ENCODE measurements at regions of chr2 and their contacts with region 1.

Region 1: DNA sequence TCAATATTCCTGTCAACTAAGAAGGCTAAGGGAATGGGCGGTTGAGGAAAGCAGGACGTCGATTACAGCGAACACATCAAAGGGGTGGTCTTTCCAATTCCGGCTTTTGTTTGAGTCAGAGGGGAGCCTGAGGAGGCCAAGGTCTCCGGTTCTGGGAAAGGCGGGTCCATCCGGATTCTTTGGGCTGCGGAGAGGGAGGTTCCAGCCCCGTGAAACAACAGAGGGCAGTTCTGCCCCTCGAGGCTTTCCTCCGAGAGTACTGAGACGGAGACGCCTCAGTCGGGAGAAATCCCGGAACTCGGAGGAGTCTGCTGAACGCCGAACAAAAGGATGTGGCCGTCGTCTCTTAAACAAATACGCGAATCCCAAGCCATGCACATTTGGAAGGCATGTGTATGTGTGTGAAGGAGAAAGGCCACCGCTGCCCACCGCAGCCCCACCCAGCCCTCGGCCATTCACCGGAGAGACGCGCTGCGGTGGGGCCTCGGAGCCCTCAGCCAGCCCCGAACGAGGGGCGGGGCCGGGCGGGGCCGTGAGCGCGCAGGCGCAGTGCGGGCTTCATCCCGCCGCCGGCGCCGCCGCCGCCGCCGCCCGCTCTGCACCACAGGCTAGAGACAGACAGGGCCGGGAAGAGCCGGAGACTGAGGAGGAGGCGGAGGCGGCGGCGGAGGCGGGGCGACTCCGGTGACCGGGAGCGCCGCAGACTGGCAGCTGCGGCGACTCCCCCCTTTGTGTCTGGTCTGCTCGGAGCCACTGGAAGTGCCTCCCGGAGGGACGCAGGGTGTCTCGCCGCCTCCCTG is at the start of gene BMPR2:
- DNase-seq: peak; percentile 63 to 90 (median 81)
- ATAC-seq: peak; percentile 77
- H3K4me3 ChIP-seq: peak within 1 kb of the TSS; percentile 61 to 100
- H3K4me3 Mint-ChIP-seq: peak within 1 kb of the TSS; percentile 99
- H3K27ac ChIP-seq: peak within 1 kb of the TSS; percentile 64 to 80
- H3K27ac Mint-ChIP-seq: peak within 1 kb of the TSS; percentile 93
- H3K4me1 ChIP-seq: peaks cover 23% of the 10 kb centered on the region
- H3K4me1 Mint-ChIP-seq: peaks cover 30% of the 10 kb centered on the region
- H3K27me3 ChIP-seq: no peaks in the 10 kb centered on the region
- H3K27me3 Mint-ChIP-seq: no peaks in the 10 kb centered on the region
- CTCF ChIP-seq: no peak
- total RNA-seq, gene BMPR2: 9.4 to 9.6 TPM

Region 2: DNA sequence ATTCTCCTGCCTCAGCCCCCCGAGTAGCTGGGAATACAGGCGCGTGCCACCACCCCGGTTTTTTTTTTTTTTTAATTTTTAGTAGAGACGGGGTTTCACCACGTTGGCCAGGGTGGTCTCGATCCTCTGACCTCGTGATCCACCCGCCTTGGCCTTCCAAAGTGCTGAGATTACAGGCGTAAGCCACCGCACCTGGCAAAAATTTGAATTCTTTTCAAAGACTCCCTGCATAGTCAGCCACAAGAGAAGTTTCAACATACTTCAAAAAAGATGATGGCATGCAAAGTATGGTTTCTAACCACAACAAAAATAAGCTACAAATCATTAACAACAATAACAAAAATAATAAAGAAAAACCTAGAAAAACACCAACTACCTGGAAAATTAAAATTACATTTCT is 1326.4 kb before region 1 on chr2:
- CTCF ChIA-PET with region 1: no interaction called
- POLR2A ChIA-PET with region 1: no interaction called
- intact Hi-C with region 1: loop called in 1 of 2 experiments (anchors 5 kb)
- DNase-seq: no peak
- ATAC-seq: no peak
- H3K4me3 ChIP-seq: no peak overlapping the region
- H3K4me3 Mint-ChIP-seq: no peak overlapping the region
- H3K27ac ChIP-seq: no peak overlapping the region
- H3K27ac Mint-ChIP-seq: no peak overlapping the region
- H3K4me1 ChIP-seq: no peaks in the 10 kb centered on the region
- H3K4me1 Mint-ChIP-seq: peaks cover 39% of the 10 kb centered on the region
- H3K27me3 ChIP-seq: no peaks in the 10 kb centered on the region
- H3K27me3 Mint-ChIP-seq: no peaks in the 10 kb centered on the region
- CTCF ChIP-seq: no peak

Region 3: GRCh38 chr2:201406077-201406662 is 969.6 kb before region 1 on chr2:
- CTCF ChIA-PET with region 1: no interaction called
- POLR2A ChIA-PET with region 1: no interaction called
- intact Hi-C with region 1: no loop called
- DNase-seq: no peak
- ATAC-seq: no peak
- H3K4me3 ChIP-seq: no peak overlapping the region
- H3K4me3 Mint-ChIP-seq: no peak overlapping the region
- H3K27ac ChIP-seq: no peak overlapping the region
- H3K27ac Mint-ChIP-seq: peak overlapping the region; percentile 55
- H3K4me1 ChIP-seq: peaks cover 14% of the 10 kb centered on the region
- H3K4me1 Mint-ChIP-seq: peaks cover 54% of the 10 kb centered on the region
- H3K27me3 ChIP-seq: no peaks in the 10 kb centered on the region
- H3K27me3 Mint-ChIP-seq: no peaks in the 10 kb centered on the region
- CTCF ChIP-seq: no peak

Region 4: GRCh38 chr2:202033321-202034248 is 342.2 kb before region 1 on chr2 and contains the start of gene FZD7:
- CTCF ChIA-PET with region 1: no interaction called
- POLR2A ChIA-PET with region 1: no interaction called
- intact Hi-C with region 1: loop called in 1 of 2 experiments (anchors 5 kb)
- DNase-seq: peak; percentile 66 to 91 (median 83)
- ATAC-seq: peak; percentile 78
- H3K4me3 ChIP-seq: peak within 1 kb of the TSS; percentile 77 to 84
- H3K4me3 Mint-ChIP-seq: peak within 1 kb of the TSS; percentile 88
- H3K27ac ChIP-seq: peak within 1 kb of the TSS in 1 of 2 experiments; percentile 14
- H3K27ac Mint-ChIP-seq: no peak within 1 kb of the TSS
- H3K4me1 ChIP-seq: peaks cover 25% of the 10 kb centered on the region
- H3K4me1 Mint-ChIP-seq: peaks cover 13% of the 10 kb centered on the region
- H3K27me3 ChIP-seq: peaks cover 26 to 29% of the 10 kb centered on the region in 2 experiments
- H3K27me3 Mint-ChIP-seq: peaks cover 12% of the 10 kb centered on the region
- CTCF ChIP-seq: no peak
- total RNA-seq, gene FZD7: 0.73 to 0.97 TPM

Region 5: GRCh38 chr2:202265467-202266277 is 110.1 kb before region 1 on chr2 and contains the start of gene NOP58:
- CTCF ChIA-PET with region 1: no interaction called
- POLR2A ChIA-PET with region 1: no interaction called
- intact Hi-C with region 1: loop called (anchors 2 kb)
- DNase-seq: peak; percentile 80 to 97 (median 87)
- ATAC-seq: peak; percentile 75
- H3K4me3 ChIP-seq: peak within 1 kb of the TSS; percentile 80 to 100
- H3K4me3 Mint-ChIP-seq: peak within 1 kb of the TSS; percentile 52
- H3K27ac ChIP-seq: peak within 1 kb of the TSS; percentile 97 to 98
- H3K27ac Mint-ChIP-seq: peak within 1 kb of the TSS; percentile 43
- H3K4me1 ChIP-seq: peaks cover 18% of the 10 kb centered on the region
- H3K4me1 Mint-ChIP-seq: peaks cover 21% of the 10 kb centered on the region
- H3K27me3 ChIP-seq: no peaks in the 10 kb centered on the region
- H3K27me3 Mint-ChIP-seq: no peaks in the 10 kb centered on the region
- CTCF ChIP-seq: no peak
- total RNA-seq, gene NOP58: 345 to 352 TPM

Region 6: GRCh38 chr2:202290970-202291369 is 84.8 kb before region 1 on chr2:
- CTCF ChIA-PET with region 1: no interaction called
- POLR2A ChIA-PET with region 1: no interaction called
- intact Hi-C with region 1: no loop called
- DNase-seq: no peak
- ATAC-seq: no peak
- H3K4me3 ChIP-seq: no peak overlapping the region
- H3K4me3 Mint-ChIP-seq: no peak overlapping the region
- H3K27ac ChIP-seq: no peak overlapping the region
- H3K27ac Mint-ChIP-seq: no peak overlapping the region
- H3K4me1 ChIP-seq: no peaks in the 10 kb centered on the region
- H3K4me1 Mint-ChIP-seq: no peaks in the 10 kb centered on the region
- H3K27me3 ChIP-seq: no peaks in the 10 kb centered on the region
- H3K27me3 Mint-ChIP-seq: no peaks in the 10 kb centered on the region
- CTCF ChIP-seq: no peak

Region 7: DNA sequence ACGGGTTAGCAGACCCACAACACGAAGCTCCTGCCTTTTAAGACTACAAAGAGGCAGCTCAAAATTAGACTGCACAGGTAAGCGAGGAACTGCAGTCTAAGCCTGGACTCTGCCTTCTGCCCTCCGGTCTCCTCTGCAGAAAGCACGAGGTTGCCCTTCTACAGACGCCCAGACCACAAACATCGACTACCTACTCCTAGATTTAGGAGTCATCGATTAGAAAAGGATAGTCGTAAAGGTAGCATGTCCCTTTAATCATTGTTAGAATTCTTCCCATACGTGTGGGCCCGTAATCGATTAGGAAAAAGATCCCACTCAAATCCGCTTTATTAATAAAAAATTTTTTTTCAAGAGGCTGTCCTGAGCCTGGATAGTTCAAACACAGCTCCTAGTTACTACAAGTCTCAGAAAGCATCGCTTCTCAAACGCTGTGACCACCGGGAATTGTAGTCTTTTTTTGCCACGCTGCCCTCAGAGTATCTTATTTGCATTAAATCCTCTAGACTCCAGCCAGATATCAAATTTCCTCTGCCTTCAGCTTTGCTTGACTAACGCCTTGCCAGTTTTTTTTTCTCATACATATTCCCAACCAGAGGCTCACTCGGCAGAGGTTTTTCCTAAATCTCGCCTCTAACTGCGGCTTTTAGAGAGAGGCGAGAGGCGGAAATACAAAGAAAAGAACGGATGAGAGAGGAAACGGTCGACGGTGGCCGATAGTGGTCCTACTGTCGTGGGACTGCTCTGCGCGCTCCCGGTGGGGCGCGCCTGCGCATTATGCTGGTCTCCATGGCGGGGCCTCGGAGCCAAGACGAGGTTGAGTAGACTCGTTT is 535.9 kb after region 1 on chr2 and contains the starts of genes CARF and WDR12:
- CTCF ChIA-PET with region 1: no interaction called
- POLR2A ChIA-PET with region 1: no interaction called
- intact Hi-C with region 1: loop called (anchors 5 kb)
- DNase-seq: peak; percentile 77 to 96 (median 90)
- ATAC-seq: peak; percentile 81
- H3K4me3 ChIP-seq: peak within 1 kb of the TSS; percentile 89 to 98
- H3K4me3 Mint-ChIP-seq: peak within 1 kb of the TSS; percentile 96
- H3K27ac ChIP-seq: peak within 1 kb of the TSS; percentile 70 to 92
- H3K27ac Mint-ChIP-seq: peak within 1 kb of the TSS; percentile 92
- H3K4me1 ChIP-seq: peaks cover 17% of the 10 kb centered on the region
- H3K4me1 Mint-ChIP-seq: peaks cover 42% of the 10 kb centered on the region
- H3K27me3 ChIP-seq: no peaks in the 10 kb centered on the region
- H3K27me3 Mint-ChIP-seq: no peaks in the 10 kb centered on the region
- CTCF ChIP-seq: no peak
- total RNA-seq, gene CARF: 6.3 to 8.7 TPM
- total RNA-seq, gene WDR12: 4.7 to 6.4 TPM